ENCODE measurements at regions of chr3 and their contacts with region 1.

Region 1: GRCh38 chr3:157136647-157137387 is 23.1 kb downstream of the CCNL1 start:
- DNase-seq: no peak
- ATAC-seq: peak in 1 of 4 experiments; percentile 8
- H3K4me3 ChIP-seq: no peak overlapping the region
- H3K4me3 Mint-ChIP-seq: no peak overlapping the region
- H3K27ac ChIP-seq: no peak overlapping the region
- H3K27ac Mint-ChIP-seq: peak overlapping the region; percentile 55 to 69
- H3K4me1 ChIP-seq: peaks cover 0 to 28% of the 10 kb centered on the region in 2 experiments
- H3K4me1 Mint-ChIP-seq: peaks cover 7 to 46% (median 40%) of the 10 kb centered on the region in 3 donors
- H3K27me3 ChIP-seq: no peaks in the 10 kb centered on the region
- H3K27me3 Mint-ChIP-seq: no peaks in the 10 kb centered on the region

Region 2: GRCh38 chr3:156509189-156510174 is 627.3 kb before region 1 on chr3:
- CTCF ChIA-PET with region 1: interaction called in 1 of 2 experiments, 18 read pairs
- POLR2A ChIA-PET with region 1: no interaction called
- DNase-seq: peak in 2 of 35 experiments; percentile 18 to 71
- ATAC-seq: peak; percentile 78 to 89 (median 80)
- H3K4me3 ChIP-seq: no peak overlapping the region
- H3K4me3 Mint-ChIP-seq: no peak overlapping the region
- H3K27ac ChIP-seq: no peak overlapping the region
- H3K27ac Mint-ChIP-seq: no peak overlapping the region
- H3K4me1 ChIP-seq: no peaks in the 10 kb centered on the region
- H3K4me1 Mint-ChIP-seq: peaks cover 8 to 17% (median 10%) of the 10 kb centered on the region in 3 donors
- H3K27me3 ChIP-seq: peaks cover 0 to 2% of the 10 kb centered on the region in 2 experiments
- H3K27me3 Mint-ChIP-seq: peaks cover 10% of the 10 kb centered on the region in 2 donors

Region 3: GRCh38 chr3:157088601-157089454 is 48.0 kb before region 1 on chr3:
- CTCF ChIA-PET with region 1: interaction called, 24 to 35 read pairs
- POLR2A ChIA-PET with region 1: interaction called, 3 read pairs
- DNase-seq: peak; percentile 83 to 97 (median 91)
- ATAC-seq: peak; percentile 91 to 98 (median 96)
- H3K4me3 ChIP-seq: peak overlapping the region; percentile 80 to 93
- H3K4me3 Mint-ChIP-seq: peak overlapping the region; percentile 84 to 87 (median 86)
- H3K27ac ChIP-seq: peak overlapping the region; percentile 97
- H3K27ac Mint-ChIP-seq: peak overlapping the region; percentile 95 to 97
- H3K4me1 ChIP-seq: peaks cover 7 to 36% of the 10 kb centered on the region in 2 experiments
- H3K4me1 Mint-ChIP-seq: peaks cover 23 to 41% (median 31%) of the 10 kb centered on the region in 3 donors
- H3K27me3 ChIP-seq: no peaks in the 10 kb centered on the region
- H3K27me3 Mint-ChIP-seq: no peaks in the 10 kb centered on the region

Region 4: DNA sequence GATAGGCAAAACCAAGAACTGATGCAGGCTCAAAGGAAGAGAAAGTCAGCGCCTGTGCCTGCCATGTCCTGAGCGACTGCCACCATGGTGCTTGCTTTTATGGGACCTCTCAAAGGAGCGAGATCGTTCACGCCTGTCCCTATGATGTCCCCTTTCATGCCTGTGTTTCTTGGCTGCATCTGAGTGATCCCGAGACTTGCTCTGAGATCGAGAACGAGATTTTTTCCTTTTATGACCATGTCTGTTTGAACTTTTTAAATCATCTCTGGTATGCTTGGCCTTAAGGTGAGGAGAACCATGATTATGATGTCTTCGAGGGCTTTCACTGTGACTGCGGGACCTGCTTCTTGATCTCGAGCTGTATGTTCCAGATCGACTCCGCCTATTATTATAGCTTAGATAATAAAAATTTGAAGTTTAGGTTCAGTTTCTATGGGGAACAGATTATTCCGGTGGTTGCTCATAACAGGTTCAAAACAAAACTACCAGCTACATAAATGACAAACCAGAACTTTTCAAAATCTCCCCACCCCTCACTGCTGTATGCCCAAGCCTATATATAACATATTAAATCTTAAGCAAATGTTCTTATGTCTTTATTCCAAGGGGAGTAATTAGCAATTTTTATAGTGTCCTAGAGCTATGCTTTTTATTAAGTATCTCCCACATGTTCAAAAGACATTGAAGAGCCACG is 11.5 kb after region 1 on chr3:
- CTCF ChIA-PET with region 1: interaction called, 5 to 6 read pairs
- POLR2A ChIA-PET with region 1: interaction called, 5 to 13 read pairs
- DNase-seq: no peak
- ATAC-seq: peak in 3 of 4 experiments; percentile 17 to 40 (median 19)
- H3K4me3 ChIP-seq: no peak overlapping the region
- H3K4me3 Mint-ChIP-seq: no peak overlapping the region
- H3K27ac ChIP-seq: no peak overlapping the region
- H3K27ac Mint-ChIP-seq: peak overlapping the region; percentile 56 to 73
- H3K4me1 ChIP-seq: peaks cover 0 to 4% of the 10 kb centered on the region in 2 experiments
- H3K4me1 Mint-ChIP-seq: peaks cover 27 to 43% (median 37%) of the 10 kb centered on the region in 3 donors
- H3K27me3 ChIP-seq: no peaks in the 10 kb centered on the region
- H3K27me3 Mint-ChIP-seq: no peaks in the 10 kb centered on the region